CD4-positive, alpha-beta T cell (primary cell): ENCODE measurements at regions of chr4 and their contacts with region 1.

Region 1: DNA sequence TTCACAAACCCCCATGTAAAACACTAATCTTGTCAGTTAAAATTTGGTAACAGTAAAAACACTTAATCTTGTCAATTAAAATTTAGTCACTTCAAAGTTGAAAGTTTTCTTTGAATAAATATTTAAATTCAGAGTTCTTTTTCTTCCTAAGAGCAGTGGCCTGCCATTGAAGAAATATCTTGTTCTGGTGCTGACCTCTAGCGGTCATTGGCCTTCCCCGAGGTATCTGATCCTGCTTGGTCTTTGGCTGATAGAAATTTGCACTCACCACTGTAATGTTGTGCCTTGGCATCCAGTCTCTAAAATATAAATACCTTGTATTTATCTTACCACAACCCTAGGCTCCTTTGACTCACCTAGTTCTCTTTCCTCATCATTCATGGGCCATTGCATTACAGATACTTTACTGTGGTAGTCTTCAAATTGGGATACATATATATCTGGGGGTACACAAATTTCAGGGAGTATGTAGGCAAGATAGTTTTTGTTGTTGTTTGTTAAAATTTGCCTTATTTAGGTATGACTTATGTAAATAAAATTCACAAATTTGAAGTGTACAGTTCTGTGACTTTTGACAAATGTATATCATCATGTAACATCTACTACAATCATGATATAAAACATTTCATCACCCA is 6.7 kb upstream of the ART3 start:
- DNase-seq: peak; percentile 44 to 82 (median 60)
- ATAC-seq: peak; percentile 80
- H3K4me3 ChIP-seq: no peak overlapping the region
- H3K4me3 Mint-ChIP-seq: no peak overlapping the region
- H3K27ac ChIP-seq: no peak overlapping the region
- H3K27ac Mint-ChIP-seq: no peak overlapping the region
- H3K4me1 ChIP-seq: no peaks in the 10 kb centered on the region
- H3K4me1 Mint-ChIP-seq: no peaks in the 10 kb centered on the region
- H3K27me3 ChIP-seq: no peaks in the 10 kb centered on the region
- H3K27me3 Mint-ChIP-seq: no peaks in the 10 kb centered on the region
- CTCF ChIP-seq: peak; percentile 90

Region 2: GRCh38 chr4:75895744-75896314 is 171.9 kb before region 1 on chr4:
- CTCF ChIA-PET with region 1: no interaction called
- POLR2A ChIA-PET with region 1: no interaction called
- intact Hi-C with region 1: loop called (anchors 1 to 5 kb)
- DNase-seq: peak in 4 of 14 experiments; percentile 18 to 73 (median 48)
- ATAC-seq: peak; percentile 52
- H3K4me3 ChIP-seq: no peak overlapping the region
- H3K4me3 Mint-ChIP-seq: no peak overlapping the region
- H3K27ac ChIP-seq: no peak overlapping the region
- H3K27ac Mint-ChIP-seq: no peak overlapping the region
- H3K4me1 ChIP-seq: no peaks in the 10 kb centered on the region
- H3K4me1 Mint-ChIP-seq: no peaks in the 10 kb centered on the region
- H3K27me3 ChIP-seq: no peaks in the 10 kb centered on the region
- H3K27me3 Mint-ChIP-seq: no peaks in the 10 kb centered on the region
- CTCF ChIP-seq: peak; percentile 69

Region 3: DNA sequence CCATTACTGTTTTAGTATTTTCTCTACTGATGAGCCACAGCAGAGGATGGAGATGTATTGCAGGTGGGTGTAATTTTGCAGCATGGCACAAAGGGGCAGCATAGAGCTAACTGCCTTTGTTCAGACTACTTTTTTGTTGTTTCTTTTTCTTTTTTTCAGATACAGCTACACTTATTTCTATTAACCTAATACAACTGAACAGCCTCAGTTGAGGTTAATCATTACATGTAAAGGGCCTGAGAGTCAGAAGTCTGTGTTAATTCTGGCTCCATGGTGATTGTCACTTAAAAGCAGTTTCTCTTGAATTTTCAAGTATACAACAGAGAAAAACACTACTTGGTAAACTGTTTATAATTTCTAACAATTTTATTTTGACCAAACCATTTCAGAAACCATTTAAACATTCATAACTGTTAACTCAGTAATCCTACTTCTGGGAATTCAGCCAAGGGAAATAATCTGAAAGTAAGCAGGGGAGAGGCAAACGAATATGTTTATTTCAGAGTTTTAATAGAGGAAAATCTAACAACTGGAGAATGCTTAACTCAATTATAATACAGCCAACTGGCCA is 151.6 kb before region 1 on chr4:
- CTCF ChIA-PET with region 1: no interaction called
- POLR2A ChIA-PET with region 1: no interaction called
- intact Hi-C with region 1: loop called (anchors 2 to 5 kb)
- DNase-seq: peak in 5 of 14 experiments; percentile 20 to 64 (median 45)
- ATAC-seq: peak; percentile 63
- H3K4me3 ChIP-seq: no peak overlapping the region
- H3K4me3 Mint-ChIP-seq: no peak overlapping the region
- H3K27ac ChIP-seq: no peak overlapping the region
- H3K27ac Mint-ChIP-seq: no peak overlapping the region
- H3K4me1 ChIP-seq: no peaks in the 10 kb centered on the region
- H3K4me1 Mint-ChIP-seq: no peaks in the 10 kb centered on the region
- H3K27me3 ChIP-seq: no peaks in the 10 kb centered on the region
- H3K27me3 Mint-ChIP-seq: no peaks in the 10 kb centered on the region
- CTCF ChIP-seq: peak; percentile 75

Region 4: DNA sequence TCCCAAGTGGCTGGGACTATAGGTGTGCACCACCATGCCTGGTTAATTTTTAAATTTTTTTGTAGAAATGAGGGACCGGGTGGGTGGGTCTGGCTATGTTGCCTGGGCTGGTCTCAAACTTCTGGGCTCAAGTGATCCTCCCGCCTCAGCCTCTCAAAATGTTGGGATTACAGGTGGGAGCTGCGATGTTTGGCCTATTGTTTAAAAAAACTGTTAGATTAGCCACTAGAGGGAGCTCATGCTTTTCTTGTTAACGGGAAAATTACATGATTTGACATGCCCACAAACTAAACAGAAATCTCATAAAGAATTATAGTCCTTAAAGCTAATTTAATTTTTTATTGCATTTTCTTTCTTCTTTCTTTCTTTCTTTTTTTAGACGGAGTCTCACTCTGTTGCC is 72.0 kb before region 1 on chr4:
- CTCF ChIA-PET with region 1: interaction called, 3 read pairs
- POLR2A ChIA-PET with region 1: no interaction called
- intact Hi-C with region 1: loop called (anchors 1 kb)
- DNase-seq: peak in 5 of 14 experiments; percentile 3 to 71 (median 61)
- ATAC-seq: no peak
- H3K4me3 ChIP-seq: no peak overlapping the region
- H3K4me3 Mint-ChIP-seq: no peak overlapping the region
- H3K27ac ChIP-seq: no peak overlapping the region
- H3K27ac Mint-ChIP-seq: no peak overlapping the region
- H3K4me1 ChIP-seq: peaks cover 6% of the 10 kb centered on the region
- H3K4me1 Mint-ChIP-seq: peaks cover 8% of the 10 kb centered on the region
- H3K27me3 ChIP-seq: no peaks in the 10 kb centered on the region
- H3K27me3 Mint-ChIP-seq: no peaks in the 10 kb centered on the region
- CTCF ChIP-seq: peak; percentile 80

Region 5: GRCh38 chr4:76105652-76106051 is 37.9 kb after region 1 on chr4:
- CTCF ChIA-PET with region 1: no interaction called
- POLR2A ChIA-PET with region 1: no interaction called
- intact Hi-C with region 1: no loop called
- DNase-seq: no peak
- ATAC-seq: no peak
- H3K4me3 ChIP-seq: no peak overlapping the region
- H3K4me3 Mint-ChIP-seq: no peak overlapping the region
- H3K27ac ChIP-seq: no peak overlapping the region
- H3K27ac Mint-ChIP-seq: no peak overlapping the region
- H3K4me1 ChIP-seq: no peaks in the 10 kb centered on the region
- H3K4me1 Mint-ChIP-seq: no peaks in the 10 kb centered on the region
- H3K27me3 ChIP-seq: no peaks in the 10 kb centered on the region
- H3K27me3 Mint-ChIP-seq: no peaks in the 10 kb centered on the region
- CTCF ChIP-seq: no peak

Region 6: GRCh38 chr4:76624241-76624681 is 556.5 kb after region 1 on chr4:
- CTCF ChIA-PET with region 1: no interaction called
- POLR2A ChIA-PET with region 1: no interaction called
- intact Hi-C with region 1: no loop called
- DNase-seq: no peak
- ATAC-seq: no peak
- H3K4me3 ChIP-seq: no peak overlapping the region
- H3K4me3 Mint-ChIP-seq: no peak overlapping the region
- H3K27ac ChIP-seq: no peak overlapping the region
- H3K27ac Mint-ChIP-seq: no peak overlapping the region
- H3K4me1 ChIP-seq: no peaks in the 10 kb centered on the region
- H3K4me1 Mint-ChIP-seq: no peaks in the 10 kb centered on the region
- H3K27me3 ChIP-seq: peaks cover 4 to 11% of the 10 kb centered on the region in 2 experiments
- H3K27me3 Mint-ChIP-seq: peaks cover 32% of the 10 kb centered on the region
- CTCF ChIP-seq: no peak

Region 7: GRCh38 chr4:76781698-76782595 is 714.2 kb after region 1 on chr4:
- CTCF ChIA-PET with region 1: no interaction called
- POLR2A ChIA-PET with region 1: no interaction called
- intact Hi-C with region 1: no loop called
- DNase-seq: no peak
- ATAC-seq: no peak
- H3K4me3 ChIP-seq: no peak overlapping the region
- H3K4me3 Mint-ChIP-seq: no peak overlapping the region
- H3K27ac ChIP-seq: no peak overlapping the region
- H3K27ac Mint-ChIP-seq: no peak overlapping the region
- H3K4me1 ChIP-seq: no peaks in the 10 kb centered on the region
- H3K4me1 Mint-ChIP-seq: no peaks in the 10 kb centered on the region
- H3K27me3 ChIP-seq: peaks cover 0 to 6% of the 10 kb centered on the region in 2 experiments
- H3K27me3 Mint-ChIP-seq: peaks cover 8% of the 10 kb centered on the region
- CTCF ChIP-seq: no peak